Activated CD8-positive, alpha-beta memory T cell treated with anti-CD3 and anti-CD28 coated beads, Interleukin-2, amount 10 ng/mL, durations not matched to agents 7 days and 5 days (primary cell): ENCODE measurements at regions of chr1 and their contacts with region 1.

Region 1: DNA sequence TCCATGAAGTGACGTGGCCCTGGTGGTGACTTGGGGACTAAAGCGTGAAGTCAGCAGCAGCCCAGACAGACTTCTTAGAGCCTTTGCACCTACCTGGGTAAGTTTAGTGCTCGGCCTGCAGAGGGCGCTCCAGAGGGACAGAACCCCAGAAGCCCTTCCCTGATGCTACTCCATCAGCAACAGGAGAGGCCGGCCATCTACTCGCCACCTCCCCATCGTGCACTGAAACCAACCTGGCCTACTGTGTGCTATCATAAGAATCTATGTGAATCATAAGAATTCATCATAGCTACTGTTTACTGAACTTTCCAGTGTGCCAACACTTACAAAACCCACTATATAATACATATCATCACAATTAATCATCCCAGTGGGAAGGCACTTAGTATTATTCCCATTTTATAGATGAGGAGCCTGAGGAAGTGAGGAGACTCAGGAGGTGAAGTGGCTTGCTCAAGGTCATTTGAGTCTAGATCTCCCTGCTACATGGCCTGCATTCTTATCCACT is 7.9 kb upstream of the EDN2 start:
- DNase-seq: peak; percentile 62
- ATAC-seq: no peak
- H3K4me3 Mint-ChIP-seq: no peak overlapping the region
- H3K27ac Mint-ChIP-seq: no peak overlapping the region
- H3K4me1 Mint-ChIP-seq: peaks cover 7% of the 10 kb centered on the region
- H3K27me3 Mint-ChIP-seq: peaks cover 19% of the 10 kb centered on the region

Region 2: GRCh38 chr1:41516168-41517061 is 24.0 kb after region 1 on chr1:
- CTCF ChIA-PET with region 1: interaction called, 17 read pairs
- DNase-seq: peak; percentile 64
- ATAC-seq: peak; percentile 85
- H3K4me3 Mint-ChIP-seq: no peak overlapping the region
- H3K27ac Mint-ChIP-seq: no peak overlapping the region
- H3K4me1 Mint-ChIP-seq: peaks cover 3% of the 10 kb centered on the region
- H3K27me3 Mint-ChIP-seq: no peaks in the 10 kb centered on the region